Panc1 (cell line): ENCODE measurements at regions of chr17 and their contacts with region 1.

Region 1: GRCh38 chr17:72872396-72872795 is 220.1 kb downstream of the SLC39A11 start:
- DNase-seq: no peak
- ATAC-seq: no peak
- H3K4me3 ChIP-seq: no peak overlapping the region
- H3K27ac ChIP-seq: no peak overlapping the region
- H3K4me1 ChIP-seq: no peaks in the 10 kb centered on the region
- H3K27me3 ChIP-seq: no peaks in the 10 kb centered on the region
- CTCF ChIP-seq: no peak

Region 2: GRCh38 chr17:72788950-72789585 is 83.3 kb before region 1 on chr17:
- CTCF ChIA-PET with region 1: no interaction called
- POLR2A ChIA-PET with region 1: no interaction called
- in situ Hi-C with region 1: no loop called
- intact Hi-C with region 1: no loop called
- DNase-seq: no peak
- ATAC-seq: no peak
- H3K4me3 ChIP-seq: no peak overlapping the region
- H3K27ac ChIP-seq: no peak overlapping the region
- H3K4me1 ChIP-seq: no peaks in the 10 kb centered on the region
- H3K27me3 ChIP-seq: no peaks in the 10 kb centered on the region
- CTCF ChIP-seq: no peak

Region 3: DNA sequence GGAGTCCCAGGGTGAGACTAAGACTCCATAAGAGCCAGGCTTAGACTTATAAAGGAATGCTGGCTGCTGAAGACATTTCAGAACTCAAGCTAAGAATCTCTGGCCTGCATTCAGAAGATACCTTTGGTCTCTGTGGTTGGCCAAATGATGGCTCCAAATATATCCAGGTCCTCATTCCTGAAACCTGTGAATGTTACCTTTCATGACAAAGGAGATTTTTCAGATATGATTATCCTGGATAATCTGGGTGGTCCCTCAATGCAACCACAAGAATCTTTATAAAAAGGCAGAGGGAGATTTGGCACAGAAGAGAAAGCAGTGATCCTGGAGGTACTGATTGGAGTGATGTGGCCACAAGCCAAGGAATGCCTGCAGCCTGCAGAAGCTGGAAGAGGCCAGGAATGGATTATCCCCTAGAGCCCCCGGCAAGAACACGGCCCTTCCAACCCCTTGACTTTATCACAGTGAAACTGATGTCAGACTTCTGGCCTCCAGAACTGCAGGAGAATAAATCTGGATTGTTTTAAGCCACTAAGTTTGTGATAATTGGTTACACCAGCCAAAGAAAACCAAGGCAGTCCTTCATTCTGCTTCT is 33.2 kb before region 1 on chr17:
- CTCF ChIA-PET with region 1: no interaction called
- POLR2A ChIA-PET with region 1: no interaction called
- in situ Hi-C with region 1: no loop called
- intact Hi-C with region 1: no loop called
- DNase-seq: no peak
- ATAC-seq: no peak
- H3K4me3 ChIP-seq: no peak overlapping the region
- H3K27ac ChIP-seq: no peak overlapping the region
- H3K4me1 ChIP-seq: no peaks in the 10 kb centered on the region
- H3K27me3 ChIP-seq: no peaks in the 10 kb centered on the region
- CTCF ChIP-seq: no peak

Region 4: DNA sequence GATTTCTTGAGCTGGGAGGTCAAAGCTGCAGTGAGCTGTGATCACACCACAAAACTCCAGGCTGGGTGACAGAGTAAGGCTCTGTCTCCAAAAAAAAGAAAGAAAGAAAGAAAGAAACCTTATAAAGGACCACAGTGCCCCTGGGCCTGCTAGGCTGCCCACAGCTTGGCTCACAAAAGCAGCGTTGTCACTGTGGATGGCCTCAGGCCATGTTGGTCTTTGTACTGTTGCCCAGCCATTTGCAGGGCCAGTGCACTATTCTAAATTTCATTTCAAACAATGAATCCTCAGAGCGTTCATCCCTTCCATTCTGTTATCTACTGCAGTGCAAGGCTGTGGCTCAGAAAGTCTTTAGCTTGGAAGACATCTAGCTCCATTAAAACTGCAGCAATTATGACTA is 11.7 kb after region 1 on chr17:
- CTCF ChIA-PET with region 1: no interaction called
- POLR2A ChIA-PET with region 1: interaction called, 11 read pairs
- in situ Hi-C with region 1: no loop called
- intact Hi-C with region 1: no loop called
- DNase-seq: no peak
- ATAC-seq: no peak
- H3K4me3 ChIP-seq: no peak overlapping the region
- H3K27ac ChIP-seq: no peak overlapping the region
- H3K4me1 ChIP-seq: no peaks in the 10 kb centered on the region
- H3K27me3 ChIP-seq: no peaks in the 10 kb centered on the region
- CTCF ChIP-seq: no peak

Region 5: DNA sequence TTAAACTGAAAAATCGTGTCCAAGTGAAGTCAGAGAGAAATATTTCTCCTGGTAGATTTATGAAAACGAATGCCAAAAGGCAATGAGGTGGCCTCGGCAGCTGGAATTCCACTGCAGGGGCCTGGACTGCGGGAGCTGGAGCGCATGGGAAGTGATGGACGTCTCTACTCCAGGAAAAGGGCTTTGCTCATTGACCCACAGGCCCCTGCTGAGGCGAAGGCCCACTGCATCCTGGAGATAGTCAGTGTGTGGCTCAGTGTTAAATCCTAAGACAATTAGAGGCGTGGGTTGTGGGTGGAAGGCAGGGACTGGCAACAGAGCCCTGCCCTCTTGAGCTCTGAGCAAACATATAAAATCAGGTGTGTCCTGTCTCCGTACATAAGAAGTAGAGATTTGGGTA is 28.7 kb after region 1 on chr17:
- CTCF ChIA-PET with region 1: no interaction called
- POLR2A ChIA-PET with region 1: no interaction called
- in situ Hi-C with region 1: no loop called
- intact Hi-C with region 1: no loop called
- DNase-seq: no peak
- ATAC-seq: 0 out of 2 replicates have a peak, but pooled peaks have one; percentile 37
- H3K4me3 ChIP-seq: no peak overlapping the region
- H3K27ac ChIP-seq: no peak overlapping the region
- H3K4me1 ChIP-seq: no peaks in the 10 kb centered on the region
- H3K27me3 ChIP-seq: no peaks in the 10 kb centered on the region
- CTCF ChIP-seq: no peak

Region 6: GRCh38 chr17:73304971-73305812 is 432.8 kb after region 1 on chr17:
- CTCF ChIA-PET with region 1: no interaction called
- POLR2A ChIA-PET with region 1: no interaction called
- in situ Hi-C with region 1: no loop called
- intact Hi-C with region 1: no loop called
- DNase-seq: no peak
- ATAC-seq: peak; percentile 68
- H3K4me3 ChIP-seq: peak overlapping the region; percentile 25 to 57
- H3K27ac ChIP-seq: peak overlapping the region; percentile 97
- H3K4me1 ChIP-seq: peaks cover 76% of the 10 kb centered on the region
- H3K27me3 ChIP-seq: no peaks in the 10 kb centered on the region
- CTCF ChIP-seq: no peak